ENCODE measurements at regions of chr5 and their contacts with region 1.

Region 1: GRCh38 chr5:76256116-76256889 is 146.8 kb upstream of the IQGAP2 start:
- DNase-seq: peak; percentile 15 to 82 (median 57)
- ATAC-seq: peak; percentile 98
- H3K4me3 ChIP-seq: no peak overlapping the region
- H3K4me3 Mint-ChIP-seq: peak overlapping the region; percentile 30
- H3K27ac ChIP-seq: no peak overlapping the region
- H3K27ac Mint-ChIP-seq: no peak overlapping the region
- H3K4me1 ChIP-seq: peaks cover 3% of the 10 kb centered on the region
- H3K4me1 Mint-ChIP-seq: peaks cover 3% of the 10 kb centered on the region
- H3K27me3 ChIP-seq: peaks cover 0 to 3% of the 10 kb centered on the region in 2 experiments
- H3K27me3 Mint-ChIP-seq: peaks cover 9% of the 10 kb centered on the region
- CTCF ChIP-seq: peak; percentile 62

Region 2: GRCh38 chr5:74919487-74919886 is 1336.8 kb before region 1 on chr5:
- CTCF ChIA-PET with region 1: no interaction called
- POLR2A ChIA-PET with region 1: no interaction called
- intact Hi-C with region 1: loop called in 1 of 2 experiments (anchors 5 kb)
- DNase-seq: peak in 3 of 9 experiments; percentile 18 to 73 (median 62)
- ATAC-seq: peak; percentile 78
- H3K4me3 ChIP-seq: no peak overlapping the region
- H3K4me3 Mint-ChIP-seq: no peak overlapping the region
- H3K27ac ChIP-seq: no peak overlapping the region
- H3K27ac Mint-ChIP-seq: no peak overlapping the region
- H3K4me1 ChIP-seq: no peaks in the 10 kb centered on the region
- H3K4me1 Mint-ChIP-seq: no peaks in the 10 kb centered on the region
- H3K27me3 ChIP-seq: no peaks in the 10 kb centered on the region
- H3K27me3 Mint-ChIP-seq: peaks cover 2% of the 10 kb centered on the region
- CTCF ChIP-seq: peak; percentile 79

Region 3: DNA sequence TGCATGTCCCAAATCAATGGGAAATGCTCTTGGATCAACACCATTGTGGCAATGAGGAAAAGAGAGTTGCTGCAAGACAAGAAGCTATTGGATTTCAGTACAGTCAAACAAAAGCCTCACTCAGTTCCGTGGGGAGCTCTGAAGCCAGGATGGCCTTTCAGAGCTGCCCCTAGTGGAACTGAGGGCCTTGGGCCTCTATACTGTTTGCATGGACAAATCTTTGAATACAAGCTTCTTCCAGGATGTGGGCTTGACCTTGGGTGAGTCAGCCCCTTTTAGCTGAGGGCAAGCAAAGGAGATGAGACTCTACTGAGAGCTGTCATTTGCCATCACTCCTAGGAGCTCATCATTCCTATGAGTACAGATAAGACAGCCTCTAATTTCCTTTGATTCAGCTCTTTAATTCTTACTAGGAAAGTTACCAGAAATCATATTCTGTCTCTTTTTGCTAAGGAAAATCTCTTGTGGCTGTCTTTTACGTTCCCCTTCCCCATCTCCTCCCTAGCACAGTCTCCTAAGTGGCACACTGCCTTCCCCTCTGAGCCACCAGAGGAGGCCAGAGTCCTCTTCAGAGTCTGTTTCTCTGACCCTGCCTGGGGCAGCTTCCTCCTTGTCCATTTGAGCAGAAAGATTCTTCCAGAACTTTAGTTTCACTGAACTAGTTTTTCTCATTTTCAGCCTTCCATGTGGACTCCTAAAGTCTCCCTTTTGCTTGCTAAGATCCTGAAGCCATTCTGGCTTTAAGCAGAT is 370.3 kb before region 1 on chr5:
- CTCF ChIA-PET with region 1: no interaction called
- POLR2A ChIA-PET with region 1: no interaction called
- intact Hi-C with region 1: loop called in 1 of 2 experiments (anchors 10 kb)
- DNase-seq: peak in 1 of 9 experiments; percentile 5
- ATAC-seq: no peak
- H3K4me3 ChIP-seq: no peak overlapping the region
- H3K4me3 Mint-ChIP-seq: no peak overlapping the region
- H3K27ac ChIP-seq: no peak overlapping the region
- H3K27ac Mint-ChIP-seq: no peak overlapping the region
- H3K4me1 ChIP-seq: no peaks in the 10 kb centered on the region
- H3K4me1 Mint-ChIP-seq: no peaks in the 10 kb centered on the region
- H3K27me3 ChIP-seq: no peaks in the 10 kb centered on the region
- H3K27me3 Mint-ChIP-seq: no peaks in the 10 kb centered on the region
- CTCF ChIP-seq: no peak

Region 4: DNA sequence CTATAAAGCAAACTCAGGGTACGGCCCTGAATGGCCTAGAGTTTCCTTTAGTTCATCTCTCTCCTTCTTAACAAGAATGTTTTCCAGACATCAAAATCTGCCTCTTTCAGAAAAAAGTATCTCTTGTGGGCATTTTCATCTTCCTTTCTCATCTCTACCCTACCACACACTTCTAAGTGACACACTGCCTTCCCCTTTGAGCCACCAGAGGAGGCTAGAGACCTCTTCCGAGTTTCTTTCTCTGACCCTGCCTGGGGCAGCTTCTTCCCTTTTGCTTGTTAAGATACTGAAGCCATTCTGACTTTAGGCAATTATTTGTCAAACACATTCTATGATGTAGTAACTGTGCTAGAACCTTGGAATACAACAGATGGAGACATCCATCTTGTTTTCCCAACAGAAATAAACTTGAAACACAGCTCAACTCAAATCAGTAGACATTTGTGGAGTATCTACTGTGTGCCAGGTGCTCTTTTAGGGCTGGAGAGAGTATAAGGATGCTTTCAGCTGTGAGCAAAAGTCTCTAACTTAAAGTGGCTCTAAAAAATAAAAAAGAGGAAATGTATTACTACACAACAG is 181.7 kb before region 1 on chr5:
- CTCF ChIA-PET with region 1: interaction called, 10 read pairs
- POLR2A ChIA-PET with region 1: no interaction called
- intact Hi-C with region 1: loop called (anchors 1 kb)
- DNase-seq: peak in 3 of 9 experiments; percentile 19 to 54 (median 39)
- ATAC-seq: peak; percentile 59
- H3K4me3 ChIP-seq: no peak overlapping the region
- H3K4me3 Mint-ChIP-seq: no peak overlapping the region
- H3K27ac ChIP-seq: no peak overlapping the region
- H3K27ac Mint-ChIP-seq: no peak overlapping the region
- H3K4me1 ChIP-seq: no peaks in the 10 kb centered on the region
- H3K4me1 Mint-ChIP-seq: no peaks in the 10 kb centered on the region
- H3K27me3 ChIP-seq: no peaks in the 10 kb centered on the region
- H3K27me3 Mint-ChIP-seq: peaks cover 53% of the 10 kb centered on the region
- CTCF ChIP-seq: peak; percentile 43

Region 5: DNA sequence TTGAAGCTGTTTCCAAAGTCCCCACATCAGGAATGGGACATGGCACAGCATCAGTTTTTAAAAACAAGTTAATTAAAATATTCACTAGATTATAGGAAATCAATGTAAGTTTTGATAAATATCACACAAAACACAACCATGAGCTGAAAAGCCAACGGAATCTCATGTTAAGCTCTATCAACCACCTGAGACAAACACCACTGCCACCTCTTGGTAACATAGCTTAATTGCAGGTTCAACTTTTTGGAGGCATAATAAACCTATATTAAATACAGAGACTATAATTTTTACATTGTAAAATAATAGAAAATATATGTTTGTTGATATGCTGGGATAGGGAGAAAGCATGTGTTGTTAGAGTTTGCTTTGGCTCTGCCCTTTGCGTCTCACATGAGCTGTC is 47.0 kb before region 1 on chr5:
- CTCF ChIA-PET with region 1: no interaction called
- POLR2A ChIA-PET with region 1: no interaction called
- intact Hi-C with region 1: no loop called
- DNase-seq: no peak
- ATAC-seq: no peak
- H3K4me3 ChIP-seq: no peak overlapping the region
- H3K4me3 Mint-ChIP-seq: no peak overlapping the region
- H3K27ac ChIP-seq: no peak overlapping the region
- H3K27ac Mint-ChIP-seq: no peak overlapping the region
- H3K4me1 ChIP-seq: no peaks in the 10 kb centered on the region
- H3K4me1 Mint-ChIP-seq: no peaks in the 10 kb centered on the region
- H3K27me3 ChIP-seq: no peaks in the 10 kb centered on the region
- H3K27me3 Mint-ChIP-seq: peaks cover 6% of the 10 kb centered on the region
- CTCF ChIP-seq: no peak

Region 6: GRCh38 chr5:76273206-76273885 is 17.0 kb after region 1 on chr5:
- CTCF ChIA-PET with region 1: interaction called, 13 read pairs
- POLR2A ChIA-PET with region 1: interaction called, 5 read pairs
- intact Hi-C with region 1: no loop called
- DNase-seq: no peak
- ATAC-seq: no peak
- H3K4me3 ChIP-seq: no peak overlapping the region
- H3K4me3 Mint-ChIP-seq: no peak overlapping the region
- H3K27ac ChIP-seq: no peak overlapping the region
- H3K27ac Mint-ChIP-seq: no peak overlapping the region
- H3K4me1 ChIP-seq: no peaks in the 10 kb centered on the region
- H3K4me1 Mint-ChIP-seq: peaks cover 6% of the 10 kb centered on the region
- H3K27me3 ChIP-seq: no peaks in the 10 kb centered on the region
- H3K27me3 Mint-ChIP-seq: no peaks in the 10 kb centered on the region
- CTCF ChIP-seq: no peak

Region 7: GRCh38 chr5:76299592-76299991 is 43.3 kb after region 1 on chr5:
- CTCF ChIA-PET with region 1: no interaction called
- POLR2A ChIA-PET with region 1: no interaction called
- intact Hi-C with region 1: no loop called
- DNase-seq: peak in 1 of 9 experiments; percentile 11
- ATAC-seq: no peak
- H3K4me3 ChIP-seq: no peak overlapping the region
- H3K4me3 Mint-ChIP-seq: no peak overlapping the region
- H3K27ac ChIP-seq: peak overlapping the region in 1 of 2 experiments; percentile 18
- H3K27ac Mint-ChIP-seq: peak overlapping the region; percentile 52
- H3K4me1 ChIP-seq: peaks cover 8% of the 10 kb centered on the region
- H3K4me1 Mint-ChIP-seq: peaks cover 32% of the 10 kb centered on the region
- H3K27me3 ChIP-seq: no peaks in the 10 kb centered on the region
- H3K27me3 Mint-ChIP-seq: peaks cover 3% of the 10 kb centered on the region
- CTCF ChIP-seq: no peak

Measured in CD8-positive, alpha-beta T cell (primary cell).